Prostate gland (tissue), 2 donors: ENCODE measurements at regions of chr2 and their contacts with region 1.

Region 1: DNA sequence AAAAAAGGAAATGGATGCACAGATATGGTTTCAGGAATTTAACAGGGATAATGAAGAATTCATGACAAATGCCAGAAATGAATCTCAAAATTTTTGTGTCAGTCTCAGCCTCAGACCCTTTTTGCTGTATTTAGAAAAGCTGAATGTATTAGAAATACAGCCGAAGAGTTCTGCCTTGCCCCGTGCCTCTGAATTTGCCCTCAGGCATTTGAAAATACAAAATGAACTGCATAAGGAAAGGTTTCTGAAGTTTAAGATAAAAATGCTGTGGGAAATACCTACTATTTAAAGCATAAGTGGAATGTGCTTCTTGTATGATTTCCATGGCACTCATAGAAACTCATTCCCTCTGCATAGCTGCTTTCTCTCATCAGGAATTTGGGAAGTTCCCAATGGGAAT is 1580.6 kb downstream of the DPP10 start:
- DNase-seq: no peak
- H3K4me3 ChIP-seq: no peak overlapping the region
- H3K27ac ChIP-seq: no peak overlapping the region
- H3K4me1 ChIP-seq: no peaks in the 10 kb centered on the region
- H3K27me3 ChIP-seq: no peaks in the 10 kb centered on the region
- CTCF ChIP-seq: no peak
- POLR2A ChIP-seq: no peak

Region 2: DNA sequence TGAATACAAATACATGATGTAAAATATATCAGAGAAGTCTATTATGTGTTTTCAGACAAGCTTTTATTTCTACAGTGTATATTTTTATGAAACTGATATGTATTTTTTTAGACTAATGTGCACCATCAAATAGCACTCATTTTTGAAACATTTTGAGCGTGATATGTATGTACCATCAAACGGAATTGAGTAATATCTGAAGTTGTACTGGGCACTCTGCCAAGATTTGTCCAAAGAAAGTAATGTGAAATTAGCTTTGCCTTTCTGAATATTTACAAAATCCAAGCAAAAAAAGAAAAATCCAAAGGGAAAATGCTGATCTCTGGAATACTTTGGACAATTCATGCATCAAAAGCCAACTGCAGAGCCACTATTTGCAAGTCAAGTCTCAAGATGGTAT is 608.6 kb before region 1 on chr2:
- intact Hi-C with region 1: no loop called
- DNase-seq: no peak
- H3K4me3 ChIP-seq: no peak overlapping the region
- H3K27ac ChIP-seq: no peak overlapping the region
- H3K4me1 ChIP-seq: no peaks in the 10 kb centered on the region
- H3K27me3 ChIP-seq: no peaks in the 10 kb centered on the region
- CTCF ChIP-seq: no peak
- POLR2A ChIP-seq: no peak

Region 3: DNA sequence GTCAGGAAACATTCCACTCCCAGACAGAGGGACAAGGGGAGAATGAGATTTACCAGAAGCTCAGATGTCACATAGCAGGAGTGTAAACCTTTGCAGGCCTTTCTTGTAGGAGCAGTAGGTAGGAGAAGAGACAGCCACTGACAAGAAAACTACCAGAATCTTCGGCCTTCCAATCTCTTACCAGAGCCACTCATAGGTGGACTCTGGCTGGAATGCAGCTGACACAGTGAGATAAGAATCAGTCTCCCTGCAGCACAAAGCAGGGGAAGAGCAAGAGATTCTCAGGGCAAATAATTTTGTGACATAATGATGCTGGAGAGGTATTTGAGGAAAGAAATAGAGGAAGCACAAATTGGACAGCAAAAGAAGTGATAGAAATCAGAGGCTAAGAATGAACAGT is 46.1 kb before region 1 on chr2:
- intact Hi-C with region 1: no loop called
- DNase-seq: no peak
- H3K4me3 ChIP-seq: no peak overlapping the region
- H3K27ac ChIP-seq: no peak overlapping the region
- H3K4me1 ChIP-seq: no peaks in the 10 kb centered on the region
- H3K27me3 ChIP-seq: no peaks in the 10 kb centered on the region
- CTCF ChIP-seq: no peak
- POLR2A ChIP-seq: no peak

Region 4: DNA sequence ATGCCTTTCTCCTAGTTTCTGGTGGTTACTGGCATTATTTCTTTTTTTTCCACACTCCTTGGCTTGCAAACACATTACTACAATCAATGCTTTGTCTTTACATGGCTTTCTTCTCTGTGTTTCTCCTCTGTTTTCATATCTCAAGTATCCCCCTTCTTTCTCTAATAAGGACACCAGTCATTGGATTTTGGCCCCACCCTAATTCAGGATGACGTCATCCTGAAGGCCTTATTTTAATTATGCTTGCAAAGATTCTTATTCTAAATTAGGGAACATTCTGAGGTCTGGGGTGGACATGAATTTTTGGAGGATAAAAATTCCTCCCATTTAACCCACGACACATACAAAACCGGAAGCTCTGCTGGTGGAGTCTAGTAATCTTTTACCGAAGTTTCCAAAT is 24.0 kb before region 1 on chr2:
- intact Hi-C with region 1: loop called (anchors 2 kb)
- DNase-seq: no peak
- H3K4me3 ChIP-seq: no peak overlapping the region
- H3K27ac ChIP-seq: no peak overlapping the region
- H3K4me1 ChIP-seq: no peaks in the 10 kb centered on the region
- H3K27me3 ChIP-seq: no peaks in the 10 kb centered on the region
- CTCF ChIP-seq: no peak
- POLR2A ChIP-seq: no peak